WTC11 (cell line): ENCODE measurements at regions of chr9 and their contacts with region 1.

Region 1: DNA sequence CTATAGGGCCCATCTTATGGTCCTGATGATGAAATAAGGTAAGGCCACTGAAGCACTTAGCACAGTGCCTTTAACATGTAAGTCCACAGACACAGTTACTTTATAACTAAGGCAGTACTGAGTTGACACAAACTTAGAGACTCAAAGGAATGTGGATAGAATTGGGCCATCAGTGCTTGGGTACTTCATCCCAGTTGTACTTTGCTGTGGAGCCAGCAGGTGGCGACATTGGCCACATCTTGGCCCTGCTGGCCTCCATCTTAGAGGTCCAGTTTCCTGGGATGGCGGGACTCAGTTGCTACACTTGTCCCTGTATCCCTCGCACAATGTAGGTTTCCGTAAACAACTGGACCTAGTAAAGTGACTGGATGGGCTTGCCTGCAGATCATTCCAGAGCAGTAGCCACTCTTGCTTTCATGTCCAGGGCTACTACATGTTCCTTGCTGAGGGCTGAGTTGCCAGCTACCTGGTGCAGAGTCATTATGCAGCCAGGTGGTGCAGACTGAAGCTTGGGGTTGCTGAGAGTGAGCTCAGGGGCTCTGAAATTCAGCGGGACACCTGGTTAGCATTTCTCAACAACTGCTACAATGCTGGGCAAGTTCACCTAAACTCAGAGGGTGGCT is 10.6 kb downstream of the MTAP start:
- DNase-seq: peak; percentile 73
- ATAC-seq: peak; percentile 75
- H3K4me3 Mint-ChIP-seq: no peak overlapping the region
- H3K27ac Mint-ChIP-seq: no peak overlapping the region
- H3K4me1 Mint-ChIP-seq: peaks cover 3% of the 10 kb centered on the region
- H3K27me3 Mint-ChIP-seq: no peaks in the 10 kb centered on the region
- CTCF ChIP-seq: peak; percentile 91

Region 2: GRCh38 chr9:21802195-21803000 is 10.7 kb before region 1 on chr9 and contains the start of gene MTAP:
- CTCF ChIA-PET with region 1: interaction called, 11 read pairs
- POLR2A ChIA-PET with region 1: no interaction called
- DNase-seq: peak; percentile 89
- ATAC-seq: peak; percentile 96
- H3K4me3 Mint-ChIP-seq: peak within 1 kb of the TSS; percentile 99
- H3K27ac Mint-ChIP-seq: peak within 1 kb of the TSS; percentile 97
- H3K4me1 Mint-ChIP-seq: peaks cover 35% of the 10 kb centered on the region
- H3K27me3 Mint-ChIP-seq: peaks cover 43% of the 10 kb centered on the region
- CTCF ChIP-seq: no peak
- total RNA-seq, gene MTAP: 71.8 to 84.3 TPM (median 73.9 TPM) in 3 replicates